GM13976 (cell line): ENCODE measurements at regions of chr4 and their contacts with region 1.

Region 1: GRCh38 chr4:64539234-64539849 is 130.1 kb upstream of the TECRL start:
- DNase-seq: peak; percentile 46
- CTCF ChIP-seq: peak; percentile 73

Region 2: GRCh38 chr4:64158648-64159326 is 380.6 kb before region 1 on chr4:
- in situ Hi-C with region 1: loop called (anchors 25 kb)
- DNase-seq: peak; percentile 36
- CTCF ChIP-seq: peak; percentile 80

Region 3: GRCh38 chr4:64361399-64361740 is 178.0 kb before region 1 on chr4:
- in situ Hi-C with region 1: no loop called
- DNase-seq: no peak
- CTCF ChIP-seq: no peak